Activated CD4-positive, alpha-beta memory T cell treated with anti-CD3 and anti-CD28 coated beads for 36 hours (primary cell): ENCODE measurements at regions of chr6 and their contacts with region 1.

Region 1: DNA sequence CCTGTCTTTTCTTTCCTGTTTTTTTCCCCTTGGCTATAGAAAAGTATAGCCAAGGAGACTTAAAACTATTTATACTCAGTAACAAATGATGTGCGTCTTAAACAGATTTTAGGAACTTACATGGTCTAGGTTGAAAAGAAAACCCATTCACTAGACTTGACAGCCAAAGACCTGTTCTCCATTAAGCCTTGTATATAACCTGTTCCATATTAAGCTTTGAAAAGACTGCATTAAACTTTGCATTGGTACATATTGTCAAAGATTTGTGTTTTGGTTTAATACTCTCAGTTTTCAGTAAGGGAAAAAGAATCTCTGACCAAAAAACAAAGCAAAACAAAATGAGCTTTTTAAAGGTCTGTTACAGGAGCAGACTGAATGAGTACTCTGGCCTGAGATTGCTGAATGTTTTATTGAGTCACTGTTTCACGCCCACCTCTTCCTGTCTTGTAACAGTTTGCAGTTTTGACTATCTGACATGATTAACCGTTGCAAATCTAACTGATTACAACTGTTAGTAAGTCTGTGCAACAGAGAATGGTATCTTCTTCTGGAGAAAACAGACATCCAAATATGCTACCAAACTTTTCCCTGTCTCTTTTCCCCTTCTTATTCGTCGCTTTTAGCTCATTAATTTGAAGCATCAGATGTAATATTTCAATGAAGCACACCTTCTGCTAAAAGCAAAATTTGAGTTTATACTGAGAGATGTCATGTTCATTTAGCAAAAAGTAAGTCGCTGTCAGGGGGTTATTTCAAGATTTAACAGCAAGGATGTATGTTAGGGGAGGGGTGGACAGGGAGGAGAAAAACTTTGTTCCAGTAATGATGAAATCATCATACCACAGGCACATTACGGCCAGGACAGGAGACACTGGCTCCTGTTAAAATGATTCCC is 59.1 kb upstream of the SUPT3H start:
- DNase-seq: peak; percentile 67
- H3K4me3 Mint-ChIP-seq: peak overlapping the region; percentile 65
- H3K27ac Mint-ChIP-seq: peak overlapping the region; percentile 92
- H3K4me1 Mint-ChIP-seq: peaks cover 85% of the 10 kb centered on the region
- H3K27me3 Mint-ChIP-seq: no peaks in the 10 kb centered on the region

Region 2: GRCh38 chr6:45310118-45310788 is 126.5 kb before region 1 on chr6:
- CTCF ChIA-PET with region 1: no interaction called
- POLR2A ChIA-PET with region 1: no interaction called
- intact Hi-C with region 1: no loop called
- DNase-seq: peak; percentile 38
- H3K4me3 Mint-ChIP-seq: no peak overlapping the region
- H3K27ac Mint-ChIP-seq: peak overlapping the region; percentile 47
- H3K4me1 Mint-ChIP-seq: peaks cover 30% of the 10 kb centered on the region
- H3K27me3 Mint-ChIP-seq: no peaks in the 10 kb centered on the region

Region 3: DNA sequence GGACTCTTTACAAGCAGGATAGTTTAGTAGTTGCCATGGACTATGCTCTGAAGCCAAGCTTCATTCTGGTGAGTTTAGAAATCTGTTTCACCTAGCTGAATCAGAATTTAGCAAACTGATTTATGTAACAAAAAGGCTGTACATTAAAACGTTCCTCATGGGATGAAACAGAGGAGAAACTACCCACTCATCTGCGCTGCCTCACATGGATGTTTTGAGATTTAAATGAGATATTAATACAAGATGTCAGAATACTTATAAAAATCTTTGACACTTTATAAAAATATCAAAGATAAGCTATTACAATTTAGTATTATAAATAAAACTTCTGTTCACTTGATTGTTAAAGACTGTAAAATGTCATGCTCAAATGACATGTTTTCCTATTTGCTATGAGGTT is 91.9 kb before region 1 on chr6:
- CTCF ChIA-PET with region 1: no interaction called
- POLR2A ChIA-PET with region 1: no interaction called
- intact Hi-C with region 1: no loop called
- DNase-seq: no peak
- H3K4me3 Mint-ChIP-seq: no peak overlapping the region
- H3K27ac Mint-ChIP-seq: no peak overlapping the region
- H3K4me1 Mint-ChIP-seq: peaks cover 1% of the 10 kb centered on the region
- H3K27me3 Mint-ChIP-seq: no peaks in the 10 kb centered on the region

Region 4: GRCh38 chr6:45479834-45480751 is 43.3 kb after region 1 on chr6:
- CTCF ChIA-PET with region 1: no interaction called
- POLR2A ChIA-PET with region 1: interaction called, 3 read pairs
- intact Hi-C with region 1: loop called (anchors 1 kb)
- DNase-seq: no peak
- H3K4me3 Mint-ChIP-seq: no peak overlapping the region
- H3K27ac Mint-ChIP-seq: no peak overlapping the region
- H3K4me1 Mint-ChIP-seq: peaks cover 17% of the 10 kb centered on the region
- H3K27me3 Mint-ChIP-seq: no peaks in the 10 kb centered on the region

Region 5: DNA sequence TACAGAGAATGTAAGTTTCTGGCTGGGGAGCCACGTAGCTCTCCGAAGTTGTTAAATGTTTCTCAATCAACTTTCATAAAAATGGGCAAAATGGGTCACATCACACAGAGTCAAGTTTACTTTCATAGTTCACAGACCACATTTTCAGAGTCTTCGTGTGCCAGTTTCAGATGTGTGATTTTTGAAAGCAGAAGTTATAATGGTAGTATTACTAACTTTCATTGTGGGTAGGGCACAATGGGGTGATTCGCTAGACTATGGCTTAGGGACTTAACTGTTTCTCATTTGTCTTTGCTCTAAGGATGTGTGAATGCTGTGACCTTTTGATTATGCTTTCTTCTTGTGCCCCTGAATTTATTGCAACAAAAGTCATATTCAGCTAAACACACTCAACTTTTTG is 49.9 kb after region 1 on chr6:
- CTCF ChIA-PET with region 1: no interaction called
- POLR2A ChIA-PET with region 1: no interaction called
- intact Hi-C with region 1: loop called (anchors 1 kb)
- DNase-seq: peak; percentile 45
- H3K4me3 Mint-ChIP-seq: peak overlapping the region; percentile 21
- H3K27ac Mint-ChIP-seq: peak overlapping the region; percentile 67
- H3K4me1 Mint-ChIP-seq: peaks cover 56% of the 10 kb centered on the region
- H3K27me3 Mint-ChIP-seq: no peaks in the 10 kb centered on the region

Region 6: GRCh38 chr6:45495429-45496084 is 58.8 kb after region 1 on chr6:
- CTCF ChIA-PET with region 1: no interaction called
- POLR2A ChIA-PET with region 1: interaction called, 10 read pairs
- intact Hi-C with region 1: no loop called
- DNase-seq: no peak
- H3K4me3 Mint-ChIP-seq: no peak overlapping the region
- H3K27ac Mint-ChIP-seq: peak overlapping the region; percentile 46
- H3K4me1 Mint-ChIP-seq: peaks cover 62% of the 10 kb centered on the region
- H3K27me3 Mint-ChIP-seq: no peaks in the 10 kb centered on the region

Region 7: GRCh38 chr6:45543298-45544235 is 106.8 kb after region 1 on chr6:
- CTCF ChIA-PET with region 1: no interaction called
- POLR2A ChIA-PET with region 1: no interaction called
- intact Hi-C with region 1: loop called (anchors 5 kb)
- DNase-seq: no peak
- H3K4me3 Mint-ChIP-seq: no peak overlapping the region
- H3K27ac Mint-ChIP-seq: peak overlapping the region; percentile 63
- H3K4me1 Mint-ChIP-seq: peaks cover 32% of the 10 kb centered on the region
- H3K27me3 Mint-ChIP-seq: no peaks in the 10 kb centered on the region

Region 8: GRCh38 chr6:45843848-45844521 is 407.2 kb after region 1 on chr6:
- CTCF ChIA-PET with region 1: no interaction called
- POLR2A ChIA-PET with region 1: no interaction called
- intact Hi-C with region 1: no loop called
- DNase-seq: no peak
- H3K4me3 Mint-ChIP-seq: no peak overlapping the region
- H3K27ac Mint-ChIP-seq: no peak overlapping the region
- H3K4me1 Mint-ChIP-seq: no peaks in the 10 kb centered on the region
- H3K27me3 Mint-ChIP-seq: no peaks in the 10 kb centered on the region